ENCODE measurements at regions of chr6 and their contacts with region 1.

Region 1: GRCh38 chr6:144131248-144131709 is 19.0 kb upstream of the STX11 start:
- DNase-seq: peak; percentile 90
- H3K4me3 ChIP-seq: no peak overlapping the region
- H3K27ac ChIP-seq: peak overlapping the region; percentile 46
- H3K4me1 ChIP-seq: peaks cover 23% of the 10 kb centered on the region
- H3K27me3 ChIP-seq: no peaks in the 10 kb centered on the region
- CTCF ChIP-seq: no peak
- POLR2A ChIP-seq: no peak

Region 2: GRCh38 chr6:144144996-144145395 is 13.7 kb after region 1 on chr6:
- CTCF ChIA-PET with region 1: interaction called, 10 read pairs
- POLR2A ChIA-PET with region 1: interaction called, 3 read pairs
- dilution Hi-C with region 1: no loop called
- intact Hi-C with region 1: loop called (anchors 1 kb)
- DNase-seq: peak; percentile 58
- H3K4me3 ChIP-seq: no peak overlapping the region
- H3K27ac ChIP-seq: peak overlapping the region; percentile 28
- H3K4me1 ChIP-seq: peaks cover 9% of the 10 kb centered on the region
- H3K27me3 ChIP-seq: no peaks in the 10 kb centered on the region
- CTCF ChIP-seq: no peak
- POLR2A ChIP-seq: no peak

Region 3: GRCh38 chr6:144158133-144158532 is 26.9 kb after region 1 on chr6:
- CTCF ChIA-PET with region 1: interaction called, 3 read pairs
- POLR2A ChIA-PET with region 1: interaction called, 3 read pairs
- dilution Hi-C with region 1: no loop called
- intact Hi-C with region 1: loop called (anchors 2 kb)
- DNase-seq: peak; percentile 79
- H3K4me3 ChIP-seq: no peak overlapping the region
- H3K27ac ChIP-seq: peak overlapping the region; percentile 93
- H3K4me1 ChIP-seq: peaks cover 32% of the 10 kb centered on the region
- H3K27me3 ChIP-seq: no peaks in the 10 kb centered on the region
- CTCF ChIP-seq: no peak
- POLR2A ChIP-seq: no peak

Region 4: DNA sequence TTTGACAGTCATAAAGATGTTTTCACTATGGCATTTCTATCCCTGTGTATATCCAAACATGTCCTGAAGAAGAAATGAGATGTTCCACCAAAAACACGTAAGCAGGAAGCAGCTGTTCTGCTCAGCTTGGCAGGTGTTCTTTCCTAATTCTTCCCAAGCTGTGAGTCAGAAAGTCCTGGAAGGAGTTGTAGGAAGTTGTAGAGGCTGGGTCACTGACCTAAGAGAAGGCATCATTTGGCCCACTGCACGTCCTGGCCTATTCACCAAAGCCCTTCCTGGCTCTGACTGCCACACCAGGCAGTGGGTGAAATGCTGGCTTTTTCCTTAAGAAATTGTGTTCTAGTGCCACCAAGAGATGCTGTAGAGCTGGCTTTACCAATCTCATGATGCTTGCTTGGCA is 59.3 kb after region 1 on chr6:
- CTCF ChIA-PET with region 1: interaction called, 4 read pairs
- POLR2A ChIA-PET with region 1: no interaction called
- dilution Hi-C with region 1: no loop called
- intact Hi-C with region 1: loop called (anchors 1 kb)
- DNase-seq: peak; percentile 95
- H3K4me3 ChIP-seq: no peak overlapping the region
- H3K27ac ChIP-seq: no peak overlapping the region
- H3K4me1 ChIP-seq: peaks cover 14% of the 10 kb centered on the region
- H3K27me3 ChIP-seq: no peaks in the 10 kb centered on the region
- CTCF ChIP-seq: peak in 1 of 2 donors; percentile 5
- POLR2A ChIP-seq: peak; percentile 57

Region 5: GRCh38 chr6:144262470-144263369 is 131.4 kb after region 1 on chr6:
- CTCF ChIA-PET with region 1: no interaction called
- POLR2A ChIA-PET with region 1: no interaction called
- dilution Hi-C with region 1: no loop called
- intact Hi-C with region 1: no loop called
- DNase-seq: no peak
- H3K4me3 ChIP-seq: no peak overlapping the region
- H3K27ac ChIP-seq: no peak overlapping the region
- H3K4me1 ChIP-seq: peaks cover 34% of the 10 kb centered on the region
- H3K27me3 ChIP-seq: no peaks in the 10 kb centered on the region
- CTCF ChIP-seq: no peak
- POLR2A ChIP-seq: no peak

Region 6: DNA sequence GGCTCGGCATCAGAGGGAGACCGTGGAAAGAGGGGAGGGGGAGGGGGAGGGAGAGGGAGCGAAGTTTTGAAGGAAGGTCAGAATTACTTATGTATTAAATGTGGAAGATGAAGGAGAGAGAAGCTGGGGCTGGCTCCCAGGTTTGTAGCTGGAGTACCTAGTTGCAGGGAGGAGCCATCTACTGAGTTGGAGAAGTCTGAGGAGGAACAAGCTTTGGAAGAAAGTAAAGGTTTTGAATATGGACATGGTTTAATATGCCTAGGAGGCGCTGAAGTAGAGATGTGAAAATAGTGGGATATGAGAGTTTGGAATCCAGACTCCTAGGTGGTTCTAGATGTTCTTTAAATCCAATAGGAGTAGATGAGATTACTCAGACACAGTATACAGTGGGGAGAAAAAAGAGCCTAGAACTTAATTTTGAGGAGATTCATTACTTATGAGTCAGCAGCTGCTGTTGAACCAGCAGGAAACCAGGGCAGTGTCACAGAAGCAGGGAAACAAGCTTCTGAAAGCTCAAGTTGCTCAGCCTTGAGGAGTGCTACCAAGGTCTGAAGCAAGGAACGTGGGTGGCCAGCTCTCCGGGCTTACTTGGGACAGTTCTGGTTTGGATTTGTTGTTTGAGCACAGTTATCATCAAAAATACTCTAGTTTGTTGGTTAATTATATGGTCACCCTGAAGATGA is 303.2 kb after region 1 on chr6:
- CTCF ChIA-PET with region 1: no interaction called
- POLR2A ChIA-PET with region 1: no interaction called
- dilution Hi-C with region 1: no loop called
- intact Hi-C with region 1: loop called (anchors 1 kb)
- DNase-seq: peak; percentile 89
- H3K4me3 ChIP-seq: no peak overlapping the region
- H3K27ac ChIP-seq: peak overlapping the region; percentile 43
- H3K4me1 ChIP-seq: peaks cover 14% of the 10 kb centered on the region
- H3K27me3 ChIP-seq: no peaks in the 10 kb centered on the region
- CTCF ChIP-seq: no peak
- POLR2A ChIP-seq: no peak

Measured in endothelial cell of umbilical vein (primary cell).